ENCODE measurements at regions of chr11 and their contacts with region 1.

Region 1: DNA sequence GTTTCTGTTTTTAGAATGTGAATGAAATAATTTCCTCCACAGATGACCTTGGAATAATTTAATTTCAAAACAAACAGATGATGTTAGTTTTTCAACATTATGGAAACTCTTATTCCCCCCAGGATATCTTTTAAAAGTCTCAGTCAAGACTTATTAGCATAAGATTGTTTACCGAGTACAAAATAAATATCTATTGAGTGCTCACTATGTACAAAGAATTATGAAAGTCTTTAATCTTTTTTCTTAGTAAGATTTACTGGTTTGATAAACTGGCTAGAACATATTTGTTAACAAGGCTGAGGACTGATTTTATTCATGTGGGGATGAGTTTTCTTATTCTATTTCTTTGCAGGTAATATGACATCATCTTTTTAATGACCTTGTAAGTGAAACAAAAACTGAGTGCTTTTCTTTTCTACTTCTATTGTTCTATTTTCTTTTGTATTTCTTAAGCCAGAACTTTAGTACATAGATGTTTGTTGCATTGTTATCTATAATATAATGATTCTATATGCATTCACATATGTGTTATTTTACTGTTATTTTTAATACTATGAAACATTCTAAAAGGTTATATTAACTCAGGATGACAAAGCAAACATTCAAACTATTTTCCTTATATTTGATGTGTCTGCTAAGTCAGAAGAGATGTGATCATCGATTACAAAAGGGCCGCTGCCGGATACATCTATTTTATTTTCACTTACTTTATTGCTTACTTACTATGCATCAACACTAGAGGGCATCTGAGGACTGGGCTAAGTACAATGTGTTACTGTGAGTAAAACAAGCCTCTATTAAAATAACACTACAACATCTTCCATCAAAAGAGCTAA is 111.0 kb upstream of the ARHGAP42 start:
- DNase-seq: peak; percentile 56
- H3K4me3 ChIP-seq: no peak overlapping the region
- H3K27ac ChIP-seq: no peak overlapping the region
- H3K4me1 ChIP-seq: no peaks in the 10 kb centered on the region
- H3K27me3 ChIP-seq: peaks cover 0 to 11% of the 10 kb centered on the region in 2 experiments
- CTCF ChIP-seq: peak; percentile 37 to 59
- POLR2A ChIP-seq: no peak

Region 2: DNA sequence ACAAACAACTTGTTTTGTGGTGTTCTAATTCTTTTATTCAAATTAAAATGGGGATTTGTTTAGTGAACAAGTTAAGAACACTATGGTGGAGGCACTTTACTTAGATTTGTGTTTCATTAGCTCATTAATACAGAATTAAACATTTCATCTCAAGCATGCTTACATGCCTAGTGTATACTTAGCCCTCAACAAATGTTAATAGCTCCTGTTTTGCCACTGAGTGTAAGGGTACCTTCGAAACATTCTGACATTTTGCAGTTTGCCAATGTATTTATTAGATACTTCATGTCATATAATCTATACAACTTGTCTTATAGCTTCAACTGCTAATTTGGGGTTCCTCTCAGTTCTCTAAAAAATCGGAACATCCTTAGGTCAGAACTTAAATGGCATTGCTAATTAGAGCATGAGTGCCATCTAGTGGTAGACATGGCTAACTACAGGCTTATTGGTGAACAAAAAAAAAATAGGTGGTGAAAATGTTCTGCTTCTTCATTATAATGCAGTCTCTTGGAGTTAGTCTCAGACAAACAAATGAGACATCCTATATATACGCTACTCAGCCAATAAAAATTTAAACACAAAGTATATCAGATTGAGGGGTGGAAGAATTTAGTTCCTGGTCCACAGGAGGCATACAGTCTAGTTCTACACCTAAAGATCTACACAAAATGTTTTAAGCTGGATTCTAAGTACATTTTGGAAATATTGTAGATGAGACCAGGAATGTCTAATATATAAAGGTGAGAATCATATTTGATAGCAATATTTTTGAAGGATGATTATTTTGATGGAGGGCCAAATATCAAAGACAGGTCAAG is 1560.2 kb before region 1 on chr11:
- CTCF ChIA-PET with region 1: no interaction called
- POLR2A ChIA-PET with region 1: no interaction called
- dilution Hi-C with region 1: no loop called
- intact Hi-C with region 1: loop called (anchors 10 kb)
- DNase-seq: peak; percentile 38
- H3K4me3 ChIP-seq: no peak overlapping the region
- H3K27ac ChIP-seq: no peak overlapping the region
- H3K4me1 ChIP-seq: no peaks in the 10 kb centered on the region
- H3K27me3 ChIP-seq: peaks cover 2 to 4% of the 10 kb centered on the region in 2 experiments
- CTCF ChIP-seq: peak; percentile 46 to 59
- POLR2A ChIP-seq: no peak

Region 3: GRCh38 chr11:100681064-100681502 is 105.0 kb after region 1 on chr11:
- CTCF ChIA-PET with region 1: interaction called, 74 read pairs
- POLR2A ChIA-PET with region 1: no interaction called
- dilution Hi-C with region 1: no loop called
- intact Hi-C with region 1: no loop called
- DNase-seq: no peak
- H3K4me3 ChIP-seq: no peak overlapping the region
- H3K27ac ChIP-seq: no peak overlapping the region
- H3K4me1 ChIP-seq: no peaks in the 10 kb centered on the region
- H3K27me3 ChIP-seq: no peaks in the 10 kb centered on the region
- CTCF ChIP-seq: no peak
- POLR2A ChIP-seq: no peak

Region 4: DNA sequence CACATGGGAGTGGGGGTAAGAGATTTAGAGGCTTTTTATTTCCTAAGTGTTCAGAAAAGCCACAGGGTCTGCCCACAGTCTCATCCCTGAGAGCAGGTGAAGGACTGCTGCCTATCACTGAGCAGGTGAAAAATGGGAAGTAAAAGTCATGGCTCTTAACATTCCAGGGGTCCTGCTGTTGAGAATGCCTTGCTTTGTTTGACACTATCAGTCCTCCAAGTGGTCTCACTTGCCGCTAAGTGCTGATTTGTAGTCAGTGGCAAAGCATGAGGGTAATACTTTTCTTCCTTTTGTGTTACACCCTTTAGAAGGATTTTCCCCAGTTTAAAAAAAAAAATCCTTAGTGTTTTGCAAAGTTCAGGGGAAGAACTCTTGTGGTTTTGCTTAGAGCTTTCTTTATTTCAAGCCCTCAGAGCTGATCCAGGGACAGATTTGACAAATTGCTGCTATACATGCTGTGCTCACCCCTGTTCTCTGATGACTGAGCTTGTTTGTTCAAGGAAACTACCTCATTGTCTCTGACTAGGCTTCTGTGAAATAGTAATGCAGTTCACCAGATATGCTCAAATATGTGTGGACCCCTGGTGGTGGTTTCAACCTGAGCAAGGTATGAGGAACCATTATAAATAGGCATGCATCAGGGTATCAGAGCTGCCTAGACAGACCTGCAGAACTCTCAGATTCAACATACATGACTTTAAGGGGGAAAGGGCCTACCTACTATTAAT is 252.0 kb after region 1 on chr11:
- CTCF ChIA-PET with region 1: interaction called, 38 read pairs
- POLR2A ChIA-PET with region 1: no interaction called
- dilution Hi-C with region 1: no loop called
- intact Hi-C with region 1: no loop called
- DNase-seq: peak; percentile 70
- H3K4me3 ChIP-seq: no peak overlapping the region
- H3K27ac ChIP-seq: no peak overlapping the region
- H3K4me1 ChIP-seq: no peaks in the 10 kb centered on the region
- H3K27me3 ChIP-seq: no peaks in the 10 kb centered on the region
- CTCF ChIP-seq: peak; percentile 33 to 48
- POLR2A ChIP-seq: no peak

Region 5: GRCh38 chr11:100930185-100930778 is 354.2 kb after region 1 on chr11:
- CTCF ChIA-PET with region 1: interaction called, 75 read pairs
- POLR2A ChIA-PET with region 1: no interaction called
- dilution Hi-C with region 1: no loop called
- intact Hi-C with region 1: loop called (anchors 1 kb)
- DNase-seq: peak; percentile 64
- H3K4me3 ChIP-seq: no peak overlapping the region
- H3K27ac ChIP-seq: no peak overlapping the region
- H3K4me1 ChIP-seq: peaks cover 4% of the 10 kb centered on the region
- H3K27me3 ChIP-seq: no peaks in the 10 kb centered on the region
- CTCF ChIP-seq: peak; percentile 44 to 49
- POLR2A ChIP-seq: no peak

Region 6: GRCh38 chr11:101498891-101499290 is 922.8 kb after region 1 on chr11:
- CTCF ChIA-PET with region 1: no interaction called
- POLR2A ChIA-PET with region 1: no interaction called
- dilution Hi-C with region 1: no loop called
- intact Hi-C with region 1: no loop called
- DNase-seq: no peak
- H3K4me3 ChIP-seq: no peak overlapping the region
- H3K27ac ChIP-seq: no peak overlapping the region
- H3K4me1 ChIP-seq: no peaks in the 10 kb centered on the region
- H3K27me3 ChIP-seq: no peaks in the 10 kb centered on the region
- CTCF ChIP-seq: no peak
- POLR2A ChIP-seq: no peak

Measured in endothelial cell of umbilical vein (primary cell).